ENCODE measurements at regions of chr6 and their contacts with region 1.

Region 1: DNA sequence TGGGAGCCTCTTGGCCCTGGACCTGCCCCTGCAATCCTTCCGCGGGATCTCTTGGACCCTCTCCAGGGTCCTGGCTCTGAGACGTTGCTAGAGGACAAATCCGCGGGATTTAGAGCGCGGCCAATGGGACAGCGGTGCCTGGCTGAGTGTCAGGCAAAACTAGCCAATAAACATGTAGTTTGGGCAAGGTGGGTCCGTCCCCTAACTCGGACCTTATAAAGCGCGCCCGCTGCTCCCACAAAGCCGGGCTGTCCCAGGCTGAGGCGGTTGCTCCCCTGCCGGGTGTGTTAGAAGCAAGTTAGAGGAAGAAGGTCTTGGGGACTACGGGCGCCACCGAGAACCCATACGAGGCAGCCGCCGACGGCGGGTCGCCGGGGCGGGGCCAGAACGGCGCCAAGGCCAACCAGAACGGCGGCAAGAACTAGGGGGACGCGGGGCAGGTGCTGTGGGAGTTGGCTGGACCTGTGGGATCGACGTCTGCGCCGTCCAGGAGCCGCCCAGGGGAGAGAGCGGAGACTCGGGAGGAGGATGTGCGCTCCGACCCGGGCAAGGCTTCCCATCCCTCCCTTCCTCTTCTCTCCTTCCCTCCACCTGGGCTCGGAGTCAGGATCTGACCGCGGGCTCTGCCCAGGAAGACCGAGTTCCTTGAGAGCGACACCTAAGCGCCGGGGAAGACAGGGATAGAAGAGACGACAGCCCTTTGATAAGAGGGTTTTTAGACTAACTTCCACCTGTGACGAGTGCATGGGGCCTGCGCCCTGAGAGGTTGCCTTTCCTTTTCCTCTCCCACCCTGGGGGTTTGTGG is 6.5 kb upstream of the TMEM14A start:
- DNase-seq: peak; percentile 77 to 86
- H3K4me3 ChIP-seq: peak overlapping the region; percentile 87
- H3K27ac ChIP-seq: no peak overlapping the region
- H3K4me1 ChIP-seq: peaks cover 3% of the 10 kb centered on the region; the same call in 1 of the 2 replicates
- H3K27me3 ChIP-seq: no peaks in the 10 kb centered on the region
- CTCF ChIP-seq: no peak

Region 2: GRCh38 chr6:52162940-52163908 is 501.2 kb before region 1 on chr6:
- CTCF ChIA-PET with region 1: interaction called, 6 read pairs
- POLR2A ChIA-PET with region 1: no interaction called
- intact Hi-C with region 1: loop called (anchors 1 kb)
- DNase-seq: no peak
- H3K4me3 ChIP-seq: no peak overlapping the region
- H3K27ac ChIP-seq: no peak overlapping the region
- H3K4me1 ChIP-seq: no peaks in the 10 kb centered on the region
- H3K27me3 ChIP-seq: 0 out of 2 replicates have a peak, but pooled peaks cover 4% of the 10 kb centered on the region
- CTCF ChIP-seq: peak; percentile 70

Region 3: DNA sequence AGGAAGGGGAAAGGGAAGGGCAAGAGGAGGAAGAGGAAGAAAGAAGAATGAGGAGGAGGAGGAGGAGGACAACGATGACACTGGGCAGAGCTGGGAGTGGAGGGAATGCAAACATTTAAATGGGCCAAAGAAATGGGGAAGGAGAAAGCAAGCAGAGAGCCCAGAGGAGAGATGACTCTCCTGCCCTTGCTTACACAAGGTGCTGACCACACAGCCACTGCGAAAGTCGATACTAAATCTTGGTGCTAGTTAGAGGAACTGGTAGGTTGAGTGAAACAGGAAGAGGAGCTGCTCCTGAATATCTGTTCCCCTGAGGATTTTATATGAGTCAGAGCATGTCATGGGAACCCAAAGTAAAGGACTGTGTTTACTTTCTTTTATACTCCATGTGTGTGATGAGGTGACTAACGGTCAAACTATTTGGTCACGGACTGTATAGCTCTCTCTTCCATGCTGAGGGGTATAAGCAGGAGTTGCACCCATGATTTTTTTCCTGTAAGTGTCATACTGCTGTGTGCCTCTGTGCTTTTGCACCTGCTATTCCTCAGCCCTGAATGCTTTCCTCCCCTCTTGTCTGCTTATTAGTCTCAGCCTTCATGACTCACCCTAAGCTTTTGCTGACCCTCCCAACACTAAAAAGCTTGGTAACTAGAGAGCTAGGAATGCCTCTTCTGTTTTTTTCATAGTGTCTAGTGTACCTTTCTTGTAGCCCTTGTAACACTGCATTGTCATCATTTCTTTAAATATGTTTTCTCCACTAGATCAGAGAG is 312.0 kb before region 1 on chr6:
- CTCF ChIA-PET with region 1: no interaction called
- POLR2A ChIA-PET with region 1: no interaction called
- intact Hi-C with region 1: loop called (anchors 2 kb)
- DNase-seq: peak; percentile 75 to 100
- H3K4me3 ChIP-seq: peak overlapping the region; percentile 8; the same call in 1 of the 2 replicates
- H3K27ac ChIP-seq: peak overlapping the region; percentile 97
- H3K4me1 ChIP-seq: peaks cover 30% of the 10 kb centered on the region
- H3K27me3 ChIP-seq: no peaks in the 10 kb centered on the region
- CTCF ChIP-seq: no peak

Region 4: GRCh38 chr6:52419809-52420670 is 244.3 kb before region 1 on chr6 and contains the start of gene EFHC1:
- CTCF ChIA-PET with region 1: interaction called, 3 read pairs
- POLR2A ChIA-PET with region 1: no interaction called
- intact Hi-C with region 1: loop called (anchors 1 kb)
- DNase-seq: peak; percentile 91 to 98
- H3K4me3 ChIP-seq: peak within 1 kb of the TSS; percentile 75
- H3K27ac ChIP-seq: peak within 1 kb of the TSS; percentile 56
- H3K4me1 ChIP-seq: peaks cover 59% of the 10 kb centered on the region
- H3K27me3 ChIP-seq: no peaks in the 10 kb centered on the region
- CTCF ChIP-seq: no peak
- total RNA-seq, gene EFHC1: 35.8 and 45.0 TPM in 2 replicates

Region 5: GRCh38 chr6:52577022-52577777 is 87.2 kb before region 1 on chr6 and contains the start of gene TRAM2:
- CTCF ChIA-PET with region 1: no interaction called
- POLR2A ChIA-PET with region 1: no interaction called
- intact Hi-C with region 1: loop called (anchors 5 kb)
- DNase-seq: peak; percentile 48 to 86
- H3K4me3 ChIP-seq: peak within 1 kb of the TSS; percentile 67
- H3K27ac ChIP-seq: peak within 1 kb of the TSS; percentile 83
- H3K4me1 ChIP-seq: peaks cover 34% of the 10 kb centered on the region
- H3K27me3 ChIP-seq: no peaks in the 10 kb centered on the region
- CTCF ChIP-seq: no peak
- total RNA-seq, gene TRAM2: 28.1 and 40.9 TPM in 2 replicates

Measured in PC-9 (cell line).